Posterior vena cava (tissue), 2 donors: ENCODE measurements at regions of chr3 and their contacts with region 1.

Region 1: DNA sequence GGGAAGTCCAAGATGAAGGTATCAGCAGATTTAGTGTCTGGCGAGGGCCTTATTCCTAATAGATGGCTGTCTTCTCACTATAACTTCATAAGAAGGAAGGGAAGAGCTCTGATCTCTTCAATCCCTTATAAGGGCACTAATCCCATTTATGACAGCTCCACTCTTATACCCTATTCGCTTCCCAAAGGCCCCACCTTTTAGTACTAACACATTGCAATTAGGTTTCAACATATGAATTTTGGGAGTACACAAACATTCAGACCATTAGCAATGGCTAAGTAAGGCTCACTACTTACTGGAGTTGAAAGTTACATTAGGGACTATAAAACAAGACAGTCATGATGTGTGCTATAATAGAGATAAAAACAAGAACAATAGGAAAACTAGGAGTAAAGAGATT is 118.9 kb downstream of the NECTIN3 start:
- DNase-seq: no peak

Region 2: GRCh38 chr3:110697961-110698360 is 492.6 kb before region 1 on chr3:
- intact Hi-C with region 1: loop called in 1 of 2 experiments (anchors 2 kb)
- DNase-seq: no peak

Region 3: DNA sequence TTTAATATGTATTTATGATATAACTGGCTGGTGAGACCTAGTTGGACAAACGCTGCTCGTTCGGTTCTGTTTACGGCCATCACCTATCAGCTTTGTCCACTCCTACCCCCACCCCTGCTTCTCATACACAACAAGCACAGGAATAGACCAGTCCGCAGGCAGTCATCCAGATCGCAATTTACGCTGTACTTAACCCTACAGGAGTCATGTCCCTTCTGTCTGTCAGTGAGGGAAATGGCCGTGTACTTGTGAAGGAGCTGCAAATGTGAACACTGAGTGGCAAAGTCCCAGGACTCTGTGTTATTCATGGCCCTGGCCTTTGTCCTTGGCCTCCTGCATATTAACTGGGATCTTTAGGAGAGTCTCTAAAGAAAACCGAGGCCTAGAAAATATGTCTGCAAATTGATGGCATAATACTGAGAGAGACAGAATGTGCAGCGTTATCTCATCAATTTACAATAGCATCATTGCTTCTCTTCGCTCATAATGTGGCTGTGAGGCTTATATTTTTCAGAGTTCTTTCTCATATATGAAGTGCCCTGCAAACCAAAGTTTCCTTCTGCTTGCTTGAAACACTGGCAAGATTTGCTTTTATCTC is 781.1 kb after region 1 on chr3:
- intact Hi-C with region 1: no loop called
- DNase-seq: no peak